SK-N-SH (cell line): ENCODE measurements at regions of chr12 and their contacts with region 1.

Region 1: GRCh38 chr12:6084261-6084968 is 40.1 kb downstream of the VWF start:
- DNase-seq: peak; percentile 85
- H3K4me3 ChIP-seq: no peak overlapping the region
- H3K27ac ChIP-seq: peak overlapping the region; percentile 50 to 98
- H3K4me1 ChIP-seq: peaks cover 27 to 56% of the 10 kb centered on the region in 2 experiments; a peak in 3 of 4 replicates
- H3K27me3 ChIP-seq: no peaks in the 10 kb centered on the region
- CTCF ChIP-seq: no peak
- EP300 ChIP-seq: peak in 1 of 2 experiments; percentile 95; a peak in 3 of 4 replicates
- RAD21 ChIP-seq: peak; percentile 34

Region 2: GRCh38 chr12:6154730-6155459 is 70.5 kb after region 1 on chr12:
- CTCF ChIA-PET with region 1: no interaction called
- POLR2A ChIA-PET with region 1: interaction called, 12 read pairs
- DNase-seq: peak; percentile 92
- H3K4me3 ChIP-seq: no peak overlapping the region
- H3K27ac ChIP-seq: peak overlapping the region in 1 of 2 experiments; percentile 95; a peak in 2 of 4 replicates
- H3K4me1 ChIP-seq: peaks cover 0 to 15% of the 10 kb centered on the region in 2 experiments; a peak in 1 of 4 replicates
- H3K27me3 ChIP-seq: no peaks in the 10 kb centered on the region
- CTCF ChIP-seq: no peak
- EP300 ChIP-seq: peak in 1 of 2 experiments; percentile 93; a peak in 2 of 4 replicates
- RAD21 ChIP-seq: peak; percentile 25

Region 3: DNA sequence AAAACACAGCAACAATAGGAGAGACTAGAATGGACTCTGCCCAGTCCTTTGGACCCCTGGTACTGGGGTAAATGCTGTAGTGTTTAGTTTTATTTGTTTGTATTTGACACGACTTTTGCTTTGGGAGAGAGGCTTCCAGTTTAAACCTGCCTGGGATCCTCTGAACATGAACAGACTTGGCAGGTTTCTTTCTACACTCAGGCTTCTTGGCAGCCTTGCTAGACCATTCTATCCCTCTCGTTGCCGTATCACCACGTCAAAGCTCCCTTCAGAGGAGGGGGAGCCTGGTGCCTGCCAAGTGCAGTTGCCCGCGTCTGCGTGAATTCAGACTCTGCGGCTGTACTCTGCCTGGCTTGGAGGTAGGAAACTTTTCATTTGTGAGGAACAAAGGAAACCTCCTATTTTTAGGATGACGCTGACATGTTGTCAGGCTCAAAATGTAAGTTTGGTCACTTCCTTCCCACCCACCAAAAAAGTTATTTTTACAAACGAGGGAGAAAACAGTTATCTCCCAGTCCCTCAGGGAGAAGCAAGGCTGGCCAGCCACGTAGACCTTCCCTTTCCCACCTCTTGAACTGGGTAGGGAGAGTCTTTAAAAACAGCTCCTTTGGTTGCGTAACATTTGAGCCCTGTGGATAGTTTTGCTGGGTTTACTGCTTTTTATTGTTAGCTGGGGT is 141.7 kb after region 1 on chr12:
- CTCF ChIA-PET with region 1: no interaction called
- POLR2A ChIA-PET with region 1: no interaction called
- DNase-seq: no peak
- H3K4me3 ChIP-seq: no peak overlapping the region
- H3K27ac ChIP-seq: no peak overlapping the region; a peak in 1 of 4 replicates
- H3K4me1 ChIP-seq: peaks cover 16 to 52% of the 10 kb centered on the region in 2 experiments; a peak in 2 of 4 replicates
- H3K27me3 ChIP-seq: no peaks in the 10 kb centered on the region
- CTCF ChIP-seq: no peak
- EP300 ChIP-seq: no peak
- RAD21 ChIP-seq: no peak